ENCODE measurements at regions of chr7 and their contacts with region 1.

Region 1: DNA sequence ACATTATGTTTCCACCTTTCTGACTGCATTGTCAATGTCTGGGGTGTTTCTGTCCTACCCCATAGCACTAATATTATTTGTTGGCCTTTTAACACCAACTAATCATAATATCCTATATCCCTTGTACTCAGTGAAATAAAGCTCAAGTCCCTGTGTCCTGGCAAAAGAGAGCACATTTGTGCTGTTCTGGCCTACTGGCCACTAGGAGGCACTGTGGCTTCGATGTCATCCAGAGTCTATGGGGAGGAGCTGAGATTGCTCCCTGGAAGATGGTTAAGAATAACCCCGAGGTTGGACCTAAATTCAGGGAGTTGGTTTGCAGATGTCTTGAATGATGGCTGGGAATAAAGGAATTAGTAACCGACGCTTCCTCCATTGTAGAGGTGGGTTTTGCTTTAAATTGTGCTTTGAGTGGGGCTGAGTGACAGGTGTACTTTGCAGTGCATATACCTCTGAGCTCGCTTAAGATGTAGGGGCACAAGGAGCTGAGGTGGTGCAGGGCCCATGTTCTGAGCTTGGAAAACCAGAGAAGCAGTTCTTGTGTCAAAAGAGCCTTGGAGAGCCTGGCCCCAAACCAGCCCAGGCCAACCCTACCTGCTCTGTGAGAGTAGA is 191.2 kb upstream of the PRSS1 start:
- DNase-seq: no peak
- ATAC-seq: peak; percentile 97
- H3K4me3 ChIP-seq: no peak overlapping the region
- H3K27ac ChIP-seq: no peak overlapping the region
- H3K4me1 ChIP-seq: no peaks in the 10 kb centered on the region
- H3K27me3 ChIP-seq: peaks cover 0 to 3% of the 10 kb centered on the region in 2 experiments; a peak in 2 of 4 replicates
- CTCF ChIP-seq: peak; percentile 88 to 95 (median 88)
- EP300 ChIP-seq: no peak
- POLR2A ChIP-seq: no peak
- RAD21 ChIP-seq: peak; percentile 78

Region 2: DNA sequence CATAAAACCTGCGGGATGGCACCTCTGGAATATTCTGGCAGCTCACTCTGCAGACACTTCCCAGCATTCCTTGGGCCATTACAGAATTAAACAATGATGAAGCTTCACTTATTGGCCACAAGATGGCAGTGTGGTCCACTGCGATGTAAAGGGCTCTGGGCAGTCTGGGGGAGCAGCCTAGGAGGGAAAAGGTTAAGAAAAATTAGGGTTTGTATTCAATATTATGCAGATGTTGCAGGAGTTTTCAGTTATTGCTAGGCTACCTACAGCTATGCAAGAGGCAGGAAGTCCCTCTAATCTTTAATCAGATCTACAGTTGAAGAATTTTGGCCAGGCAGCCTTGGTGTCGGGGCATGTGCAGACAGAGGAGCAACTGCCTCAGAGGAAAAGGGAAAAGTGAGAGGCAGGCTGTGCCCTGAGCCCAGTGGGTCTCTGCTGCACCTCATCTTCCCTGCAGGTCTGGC is 42.0 kb before region 1 on chr7:
- CTCF ChIA-PET with region 1: interaction called, 10 read pairs
- POLR2A ChIA-PET with region 1: no interaction called
- RAD21 ChIA-PET with region 1: no interaction called
- SMC1A ChIA-PET with region 1: no interaction called
- in situ Hi-C with region 1: no loop called
- intact Hi-C with region 1: no loop called
- DNase-seq: peak; percentile 17
- ATAC-seq: peak; percentile 96
- H3K4me3 ChIP-seq: no peak overlapping the region
- H3K27ac ChIP-seq: no peak overlapping the region
- H3K4me1 ChIP-seq: no peaks in the 10 kb centered on the region
- H3K27me3 ChIP-seq: no peaks in the 10 kb centered on the region
- CTCF ChIP-seq: peak; percentile 73 to 80 (median 76)
- EP300 ChIP-seq: no peak
- POLR2A ChIP-seq: no peak
- RAD21 ChIP-seq: peak; percentile 60

Region 3: DNA sequence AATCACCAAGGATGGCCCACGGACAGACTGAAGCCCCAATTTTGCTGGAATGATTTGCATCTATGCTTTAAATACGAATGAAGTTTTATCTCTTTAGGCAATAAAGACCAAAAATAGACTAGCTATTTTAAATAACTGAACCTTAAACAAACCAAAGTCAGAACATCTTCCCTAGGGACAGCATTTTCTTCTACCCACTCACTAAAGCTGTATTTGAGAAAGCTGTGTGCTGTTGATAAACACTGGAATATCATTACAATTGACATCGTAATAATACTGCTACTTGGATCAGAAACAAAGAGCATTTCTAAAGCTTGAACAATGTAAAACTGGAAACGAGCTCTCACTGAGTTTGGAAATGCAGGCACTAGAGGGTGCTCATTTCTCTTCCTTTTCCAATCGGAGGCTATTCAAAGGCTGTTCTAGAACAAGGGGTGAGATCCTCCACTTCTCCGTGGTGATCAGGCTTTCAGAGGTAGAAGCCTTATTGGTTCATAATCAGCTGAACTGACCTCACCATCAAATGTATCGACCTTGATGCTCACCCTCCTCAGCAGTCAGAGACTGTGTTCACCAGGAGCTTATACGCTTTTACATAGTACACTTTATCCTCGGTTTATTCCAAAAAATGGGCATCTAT is 34.1 kb before region 1 on chr7:
- CTCF ChIA-PET with region 1: interaction called, 10 read pairs
- POLR2A ChIA-PET with region 1: no interaction called
- RAD21 ChIA-PET with region 1: interaction called, 7 read pairs
- SMC1A ChIA-PET with region 1: interaction called, 5 read pairs
- in situ Hi-C with region 1: no loop called
- intact Hi-C with region 1: no loop called
- DNase-seq: no peak
- ATAC-seq: no peak
- H3K4me3 ChIP-seq: no peak overlapping the region
- H3K27ac ChIP-seq: no peak overlapping the region
- H3K4me1 ChIP-seq: no peaks in the 10 kb centered on the region
- H3K27me3 ChIP-seq: no peaks in the 10 kb centered on the region; a peak in 3 of 4 replicates
- CTCF ChIP-seq: no peak
- EP300 ChIP-seq: no peak
- POLR2A ChIP-seq: no peak
- RAD21 ChIP-seq: no peak

Region 4: GRCh38 chr7:142571581-142571980 is 13.5 kb after region 1 on chr7:
- CTCF ChIA-PET with region 1: interaction called, 27 read pairs
- POLR2A ChIA-PET with region 1: no interaction called
- RAD21 ChIA-PET with region 1: interaction called, 4 read pairs
- SMC1A ChIA-PET with region 1: interaction called, 4 read pairs
- in situ Hi-C with region 1: no loop called
- intact Hi-C with region 1: no loop called
- DNase-seq: no peak
- ATAC-seq: no peak
- H3K4me3 ChIP-seq: no peak overlapping the region
- H3K27ac ChIP-seq: no peak overlapping the region
- H3K4me1 ChIP-seq: no peaks in the 10 kb centered on the region
- H3K27me3 ChIP-seq: no peaks in the 10 kb centered on the region
- CTCF ChIP-seq: no peak
- EP300 ChIP-seq: no peak
- POLR2A ChIP-seq: no peak
- RAD21 ChIP-seq: no peak

Region 5: GRCh38 chr7:142581346-142581745 is 23.3 kb after region 1 on chr7:
- CTCF ChIA-PET with region 1: interaction called, 165 read pairs
- POLR2A ChIA-PET with region 1: interaction called, 9 read pairs
- RAD21 ChIA-PET with region 1: interaction called, 127 read pairs
- SMC1A ChIA-PET with region 1: interaction called, 76 read pairs
- in situ Hi-C with region 1: no loop called
- intact Hi-C with region 1: no loop called
- DNase-seq: no peak
- ATAC-seq: peak; percentile 65
- H3K4me3 ChIP-seq: no peak overlapping the region
- H3K27ac ChIP-seq: no peak overlapping the region
- H3K4me1 ChIP-seq: peaks cover 10% of the 10 kb centered on the region
- H3K27me3 ChIP-seq: no peaks in the 10 kb centered on the region
- CTCF ChIP-seq: no peak
- EP300 ChIP-seq: no peak
- POLR2A ChIP-seq: no peak
- RAD21 ChIP-seq: no peak

Region 6: GRCh38 chr7:142587578-142588191 is 29.6 kb after region 1 on chr7:
- CTCF ChIA-PET with region 1: interaction called, 165 read pairs
- POLR2A ChIA-PET with region 1: interaction called, 9 read pairs
- RAD21 ChIA-PET with region 1: interaction called, 127 read pairs
- SMC1A ChIA-PET with region 1: interaction called, 76 read pairs
- in situ Hi-C with region 1: no loop called
- intact Hi-C with region 1: loop called (anchors 1 kb)
- DNase-seq: peak; percentile 15
- ATAC-seq: peak; percentile 88
- H3K4me3 ChIP-seq: no peak overlapping the region
- H3K27ac ChIP-seq: no peak overlapping the region
- H3K4me1 ChIP-seq: 0 out of 2 replicates have a peak, but pooled peaks cover 4% of the 10 kb centered on the region
- H3K27me3 ChIP-seq: no peaks in the 10 kb centered on the region
- CTCF ChIP-seq: peak; percentile 75 to 93 (median 75); a peak in 5 of 6 replicates
- EP300 ChIP-seq: no peak
- POLR2A ChIP-seq: no peak
- RAD21 ChIP-seq: peak; percentile 48

Region 7: DNA sequence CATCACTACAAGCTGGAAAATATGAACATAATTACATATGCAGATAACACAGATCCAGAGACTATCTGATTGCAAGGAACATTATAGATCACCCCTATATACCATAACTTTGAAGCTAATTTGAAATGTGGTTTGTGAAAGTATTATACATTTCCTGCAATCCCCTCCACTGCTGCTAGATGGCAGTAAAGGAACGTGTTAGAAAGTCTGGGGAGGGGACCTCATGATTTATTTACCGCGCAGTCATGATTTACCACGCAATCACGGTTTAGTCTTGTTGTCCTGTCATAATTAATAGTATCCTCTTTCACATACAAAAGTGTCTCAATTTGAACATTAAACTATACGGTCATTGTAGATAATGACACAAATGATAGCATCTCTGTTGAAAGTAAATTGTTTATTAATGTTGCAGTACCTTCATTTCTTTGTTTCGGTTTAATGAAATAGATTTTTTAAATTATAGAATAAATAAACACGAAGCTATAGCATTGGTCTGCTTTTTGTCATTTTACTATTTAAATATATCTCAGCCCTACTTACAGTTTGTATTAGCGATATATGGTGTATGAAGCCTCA is 45.9 kb after region 1 on chr7:
- CTCF ChIA-PET with region 1: interaction called, 20 read pairs
- POLR2A ChIA-PET with region 1: no interaction called
- RAD21 ChIA-PET with region 1: interaction called, 5 read pairs
- SMC1A ChIA-PET with region 1: interaction called, 10 read pairs
- in situ Hi-C with region 1: no loop called
- intact Hi-C with region 1: no loop called
- DNase-seq: no peak
- ATAC-seq: peak; percentile 74
- H3K4me3 ChIP-seq: no peak overlapping the region
- H3K27ac ChIP-seq: no peak overlapping the region
- H3K4me1 ChIP-seq: no peaks in the 10 kb centered on the region
- H3K27me3 ChIP-seq: no peaks in the 10 kb centered on the region
- CTCF ChIP-seq: peak; percentile 74 to 81 (median 81)
- EP300 ChIP-seq: no peak
- POLR2A ChIP-seq: no peak
- RAD21 ChIP-seq: peak; percentile 82